ENCODE measurements at regions of chr17 and their contacts with region 1.

Region 1: GRCh38 chr17:8409966-8410864 is 12.6 kb upstream of the RNF222 start:
- DNase-seq: peak; percentile 89
- ATAC-seq: peak; percentile 93

Region 2: DNA sequence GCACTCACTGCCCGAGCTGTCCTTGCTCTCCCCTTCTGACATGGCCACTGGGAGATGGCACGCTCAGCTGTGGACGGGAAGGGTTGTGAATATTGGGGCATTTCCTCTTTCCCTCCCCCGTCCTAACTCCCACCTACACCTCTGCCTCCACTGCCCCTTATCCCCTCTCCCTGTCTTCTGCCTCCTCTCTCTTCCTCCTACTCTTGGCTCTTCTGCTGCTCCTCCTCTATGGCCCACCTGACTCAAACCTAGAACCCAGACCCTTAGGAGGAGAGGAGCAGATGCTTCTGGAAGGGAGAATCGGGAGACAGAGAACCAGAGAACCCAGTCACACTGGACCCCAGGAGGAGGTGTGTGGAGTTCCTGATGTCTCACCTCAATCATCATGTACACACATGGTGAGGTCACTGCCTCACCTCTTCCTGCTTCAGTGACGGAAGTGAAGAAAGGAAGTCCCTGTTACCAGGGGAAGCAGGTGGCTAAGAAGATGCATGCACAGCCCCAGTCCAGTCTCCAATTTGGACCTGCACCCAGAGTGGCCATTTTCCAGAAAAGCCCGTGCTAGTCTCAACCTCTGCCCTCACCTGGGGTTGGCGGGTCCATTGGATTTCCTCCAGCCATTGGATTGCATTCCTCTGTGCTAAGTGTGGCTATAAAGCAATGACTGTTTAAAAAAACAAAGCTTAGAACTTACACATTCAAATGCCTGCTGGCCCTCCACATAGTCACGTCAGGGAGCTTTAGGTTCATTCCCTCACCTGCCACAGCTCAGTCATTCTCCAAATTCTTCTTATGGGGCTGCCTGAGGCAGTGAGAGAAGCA is 16.6 kb before region 1 on chr17:
- intact Hi-C with region 1: no loop called
- DNase-seq: no peak
- ATAC-seq: no peak

Region 3: GRCh38 chr17:8785547-8786413 is 375.6 kb after region 1 on chr17:
- intact Hi-C with region 1: loop called (anchors 2 kb)
- DNase-seq: peak; percentile 76
- ATAC-seq: peak; percentile 84

Measured in Right ventricle myocardium inferior (tissue), 1 donor.